Mammary epithelial cell (primary cell): ENCODE measurements at regions of chr10 and their contacts with region 1.

Region 1: GRCh38 chr10:119489991-119490326 is 52.6 kb downstream of the RGS10 start:
- DNase-seq: no peak
- H3K4me3 ChIP-seq: no peak overlapping the region
- H3K27ac ChIP-seq: no peak overlapping the region
- H3K4me1 ChIP-seq: no peaks in the 10 kb centered on the region
- H3K27me3 ChIP-seq: no peaks in the 10 kb centered on the region
- CTCF ChIP-seq: no peak

Region 2: GRCh38 chr10:119409866-119410299 is 80.1 kb before region 1 on chr10:
- CTCF ChIA-PET with region 1: no interaction called
- dilution Hi-C with region 1: loop called (anchors 5 kb)
- in situ Hi-C with region 1: no loop called
- intact Hi-C with region 1: no loop called
- DNase-seq: no peak
- H3K4me3 ChIP-seq: no peak overlapping the region
- H3K27ac ChIP-seq: no peak overlapping the region
- H3K4me1 ChIP-seq: no peaks in the 10 kb centered on the region
- H3K27me3 ChIP-seq: no peaks in the 10 kb centered on the region
- CTCF ChIP-seq: no peak

Region 3: GRCh38 chr10:119416855-119417254 is 73.1 kb before region 1 on chr10:
- CTCF ChIA-PET with region 1: no interaction called
- dilution Hi-C with region 1: no loop called
- in situ Hi-C with region 1: no loop called
- intact Hi-C with region 1: loop called (anchors 1 kb)
- DNase-seq: peak; percentile 41
- H3K4me3 ChIP-seq: no peak overlapping the region
- H3K27ac ChIP-seq: no peak overlapping the region
- H3K4me1 ChIP-seq: no peaks in the 10 kb centered on the region
- H3K27me3 ChIP-seq: no peaks in the 10 kb centered on the region
- CTCF ChIP-seq: peak; percentile 74 to 91

Region 4: GRCh38 chr10:119445311-119445934 is 44.5 kb before region 1 on chr10:
- CTCF ChIA-PET with region 1: interaction called, 4 read pairs
- dilution Hi-C with region 1: no loop called
- in situ Hi-C with region 1: no loop called
- intact Hi-C with region 1: loop called (anchors 1 kb)
- DNase-seq: peak; percentile 50
- H3K4me3 ChIP-seq: no peak overlapping the region
- H3K27ac ChIP-seq: no peak overlapping the region
- H3K4me1 ChIP-seq: peaks cover 17% of the 10 kb centered on the region
- H3K27me3 ChIP-seq: no peaks in the 10 kb centered on the region
- CTCF ChIP-seq: peak; percentile 84 to 94